ENCODE measurements at regions of chr15 and their contacts with region 1.

Region 1: GRCh38 chr15:90184786-90185569 is 16.2 kb upstream of the SEMA4B start:
- DNase-seq: peak; percentile 72
- H3K4me3 Mint-ChIP-seq: peak overlapping the region; percentile 88
- H3K27ac Mint-ChIP-seq: peak overlapping the region; percentile 71
- H3K4me1 Mint-ChIP-seq: peaks cover 27% of the 10 kb centered on the region
- H3K27me3 Mint-ChIP-seq: no peaks in the 10 kb centered on the region

Region 2: GRCh38 chr15:90201130-90201949 is 16.4 kb after region 1 on chr15 and contains the start of gene SEMA4B:
- CTCF ChIA-PET with region 1: no interaction called
- POLR2A ChIA-PET with region 1: interaction called, 20 read pairs
- DNase-seq: peak; percentile 80
- H3K4me3 Mint-ChIP-seq: peak within 1 kb of the TSS; percentile 81
- H3K27ac Mint-ChIP-seq: peak within 1 kb of the TSS; percentile 59
- H3K4me1 Mint-ChIP-seq: peaks cover 29% of the 10 kb centered on the region
- H3K27me3 Mint-ChIP-seq: peaks cover 3% of the 10 kb centered on the region
- total RNA-seq, gene SEMA4B: 29.7 to 29.9 TPM